ENCODE measurements at regions of chr15 and their contacts with region 1.

Region 1: DNA sequence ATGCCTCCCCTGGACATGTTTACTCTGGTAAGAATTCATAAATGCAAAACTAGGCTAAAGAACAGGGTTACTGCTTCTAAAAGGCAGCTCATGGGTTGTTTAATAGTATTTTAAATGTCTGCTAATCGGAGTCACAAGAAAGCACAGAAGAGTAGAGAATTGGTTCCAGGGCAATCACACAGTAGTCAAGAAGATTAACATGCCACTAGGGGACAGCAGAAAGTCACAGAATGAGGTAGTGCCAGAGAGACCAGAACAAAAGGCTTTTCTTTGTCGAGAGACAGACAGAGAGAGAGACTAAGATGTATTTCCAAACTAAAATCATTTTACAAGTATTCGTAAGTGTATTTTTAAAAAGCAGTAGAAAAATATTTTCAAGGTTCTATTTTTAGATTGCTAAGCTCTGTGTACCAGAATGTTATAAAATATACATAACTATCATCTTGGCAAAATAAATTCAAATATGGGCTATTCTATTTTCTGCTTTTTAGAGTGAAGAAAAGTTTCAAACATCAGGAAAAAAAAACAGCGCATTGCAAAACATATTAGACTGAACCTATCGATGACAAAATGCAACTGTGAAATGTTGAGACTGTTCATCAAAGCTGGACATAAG is 78.3 kb upstream of the CDIN1 start:
- DNase-seq: no peak
- ATAC-seq: peak; percentile 54
- H3K4me3 Mint-ChIP-seq: no peak overlapping the region
- H3K27ac Mint-ChIP-seq: no peak overlapping the region
- H3K4me1 Mint-ChIP-seq: no peaks in the 10 kb centered on the region
- H3K27me3 Mint-ChIP-seq: peaks cover 6% of the 10 kb centered on the region
- CTCF ChIP-seq: no peak

Region 2: DNA sequence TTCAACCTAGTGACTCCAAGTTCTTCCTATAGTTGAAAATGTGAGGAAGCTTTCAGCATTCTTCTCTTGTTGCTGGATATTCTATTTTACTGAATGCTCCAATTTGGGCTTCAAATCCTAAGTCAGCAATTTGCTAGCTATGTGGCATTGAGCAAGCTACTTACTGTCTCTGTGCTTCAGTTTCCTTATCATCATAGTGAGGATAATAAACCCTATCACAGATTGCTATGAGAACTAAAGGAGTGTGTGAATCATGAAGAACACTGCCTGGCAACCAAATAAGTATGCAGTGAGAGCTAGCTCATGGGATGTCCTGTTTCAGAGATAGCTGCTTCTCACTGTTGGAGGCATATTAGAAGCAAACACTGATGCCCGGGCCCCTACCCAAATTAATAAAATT is 85.5 kb before region 1 on chr15:
- CTCF ChIA-PET with region 1: no interaction called
- POLR2A ChIA-PET with region 1: no interaction called
- intact Hi-C with region 1: no loop called
- DNase-seq: no peak
- ATAC-seq: no peak
- H3K4me3 Mint-ChIP-seq: no peak overlapping the region
- H3K27ac Mint-ChIP-seq: no peak overlapping the region
- H3K4me1 Mint-ChIP-seq: no peaks in the 10 kb centered on the region
- H3K27me3 Mint-ChIP-seq: no peaks in the 10 kb centered on the region
- CTCF ChIP-seq: no peak

Region 3: DNA sequence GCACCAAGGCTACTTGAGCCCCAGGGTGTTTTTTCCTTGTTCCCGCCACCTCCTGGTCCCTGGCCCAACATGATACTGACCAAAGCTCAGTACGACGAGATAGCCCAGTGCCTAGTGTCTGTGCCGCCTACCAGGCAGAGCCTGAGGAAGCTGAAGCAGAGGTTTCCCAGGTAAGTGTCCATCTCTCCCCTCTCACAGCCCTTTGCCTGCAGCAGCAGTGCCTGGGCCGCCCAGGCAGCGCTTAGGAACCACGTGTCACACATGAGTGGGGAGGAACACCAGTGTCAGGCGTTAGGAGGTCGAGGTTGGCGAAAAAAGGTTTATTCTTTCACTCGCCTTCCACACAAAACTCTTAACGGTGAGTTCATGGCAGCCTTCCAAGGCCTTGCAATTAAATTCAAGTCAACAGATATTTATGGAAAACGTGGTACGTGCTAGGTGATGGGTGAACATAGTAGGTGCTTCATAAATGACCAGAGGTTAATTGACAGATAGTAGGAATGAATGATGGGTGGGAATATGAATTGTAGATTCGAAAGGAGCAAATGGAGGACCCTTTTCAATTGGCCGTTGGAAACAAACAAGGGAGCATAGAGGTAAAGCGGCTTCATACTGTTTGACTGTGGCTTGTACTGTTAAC is 78.7 kb after region 1 on chr15:
- CTCF ChIA-PET with region 1: no interaction called
- POLR2A ChIA-PET with region 1: interaction called, 10 read pairs
- intact Hi-C with region 1: no loop called
- DNase-seq: no peak
- ATAC-seq: peak; percentile 19
- H3K4me3 Mint-ChIP-seq: peak overlapping the region; percentile 93
- H3K27ac Mint-ChIP-seq: peak overlapping the region; percentile 96
- H3K4me1 Mint-ChIP-seq: peaks cover 22% of the 10 kb centered on the region
- H3K27me3 Mint-ChIP-seq: peaks cover 2% of the 10 kb centered on the region
- CTCF ChIP-seq: no peak

Region 4: GRCh38 chr15:37106490-37107001 is 605.4 kb after region 1 on chr15:
- CTCF ChIA-PET with region 1: interaction called, 3 read pairs
- POLR2A ChIA-PET with region 1: no interaction called
- intact Hi-C with region 1: loop called (anchors 1 kb)
- DNase-seq: no peak
- ATAC-seq: no peak
- H3K4me3 Mint-ChIP-seq: no peak overlapping the region
- H3K27ac Mint-ChIP-seq: no peak overlapping the region
- H3K4me1 Mint-ChIP-seq: peaks cover 26% of the 10 kb centered on the region
- H3K27me3 Mint-ChIP-seq: peaks cover 83% of the 10 kb centered on the region
- CTCF ChIP-seq: no peak

Region 5: DNA sequence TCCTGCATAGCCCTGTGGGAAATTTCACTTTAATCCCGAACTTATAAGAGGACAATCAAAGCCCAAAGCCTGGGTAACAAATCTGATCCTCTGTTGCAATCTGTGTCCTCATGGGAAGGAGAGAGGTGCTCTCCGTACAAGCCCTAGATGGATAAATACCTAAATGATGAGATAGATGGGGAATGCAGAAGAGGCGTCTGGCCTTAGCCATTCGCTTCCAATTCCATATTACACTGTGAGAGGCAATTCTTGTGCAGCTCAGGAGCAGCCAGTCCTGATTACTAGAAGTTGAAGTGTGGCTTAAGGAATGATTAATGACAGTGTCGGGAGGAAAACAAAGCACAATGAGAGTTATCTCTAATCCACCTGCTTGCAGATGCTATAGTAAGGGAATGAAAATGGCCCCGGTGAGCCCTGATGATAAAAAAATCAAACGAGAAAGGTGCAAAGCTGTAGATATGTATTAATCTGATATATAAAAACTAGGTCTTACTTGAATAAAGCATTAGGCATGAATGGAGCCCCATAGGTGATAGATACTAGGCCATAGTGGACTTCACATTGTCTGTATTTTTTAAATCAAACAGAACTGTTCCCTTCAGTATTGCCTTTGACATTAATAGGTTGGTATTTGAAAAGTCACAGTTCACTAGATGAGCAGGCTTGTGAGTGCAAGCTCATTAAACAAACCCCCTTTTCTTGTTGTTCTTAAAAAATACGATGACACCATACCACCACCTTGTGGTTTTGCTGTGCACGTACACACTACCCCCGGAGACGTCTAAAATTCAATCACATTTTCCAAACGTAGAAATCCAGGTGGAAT is 1379.1 kb after region 1 on chr15:
- CTCF ChIA-PET with region 1: interaction called, 3 read pairs
- POLR2A ChIA-PET with region 1: no interaction called
- intact Hi-C with region 1: loop called (anchors 2 kb)
- DNase-seq: no peak
- ATAC-seq: no peak
- H3K4me3 Mint-ChIP-seq: no peak overlapping the region
- H3K27ac Mint-ChIP-seq: no peak overlapping the region
- H3K4me1 Mint-ChIP-seq: no peaks in the 10 kb centered on the region
- H3K27me3 Mint-ChIP-seq: peaks cover 6% of the 10 kb centered on the region
- CTCF ChIP-seq: no peak

Region 6: DNA sequence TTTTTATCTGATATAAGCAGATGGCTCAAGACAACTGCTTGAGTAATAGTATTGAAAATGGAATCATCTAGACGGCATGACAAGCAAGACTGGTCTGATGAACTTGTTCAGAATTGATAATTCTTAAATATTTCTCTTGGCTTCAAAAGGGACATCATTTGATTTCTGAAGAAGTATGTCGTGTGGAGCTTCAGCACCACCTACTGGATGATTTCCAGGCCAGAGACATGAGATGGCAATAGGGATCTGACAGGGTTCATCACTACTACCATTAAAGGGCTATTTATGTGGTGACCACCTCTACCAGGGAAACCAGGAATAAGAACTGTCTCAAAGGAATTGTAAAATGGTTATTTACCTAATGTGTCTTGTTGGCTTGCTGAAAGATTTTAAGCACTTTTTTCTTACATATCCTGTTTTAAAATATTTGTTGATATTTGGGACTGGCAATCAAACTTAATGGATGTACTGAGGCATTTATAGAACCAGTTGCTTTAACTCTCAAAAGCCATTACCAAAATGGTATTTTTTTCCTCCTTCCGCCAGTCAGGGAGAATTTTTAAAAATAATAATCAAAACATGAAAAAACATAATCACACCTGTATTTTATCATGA is 1853.3 kb after region 1 on chr15:
- CTCF ChIA-PET with region 1: interaction called, 3 read pairs
- POLR2A ChIA-PET with region 1: no interaction called
- intact Hi-C with region 1: loop called (anchors 1 kb)
- DNase-seq: peak; percentile 16
- ATAC-seq: peak; percentile 65
- H3K4me3 Mint-ChIP-seq: no peak overlapping the region
- H3K27ac Mint-ChIP-seq: no peak overlapping the region
- H3K4me1 Mint-ChIP-seq: no peaks in the 10 kb centered on the region
- H3K27me3 Mint-ChIP-seq: no peaks in the 10 kb centered on the region
- CTCF ChIP-seq: no peak

Measured in activated B cell treated with CpG ODN at 0.5 μM for 24 hours (primary cell).